Colonic mucosa (tissue), 4 donors: ENCODE measurements at regions of chr11 and their contacts with region 1.

Region 1: DNA sequence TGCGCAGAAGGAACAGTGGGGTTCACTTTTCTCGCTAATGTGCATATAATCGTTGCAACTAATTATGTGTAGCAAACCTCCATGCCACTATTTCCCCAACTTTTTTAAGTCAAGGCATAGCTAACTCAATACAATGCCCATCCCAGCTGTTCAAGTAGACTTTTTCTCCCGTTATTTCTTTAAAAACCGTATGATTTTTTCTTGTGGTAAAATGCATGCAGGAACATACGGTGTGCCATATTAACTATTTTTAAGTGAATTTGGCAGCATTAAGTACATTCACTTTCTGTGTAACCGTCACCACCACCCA is 2.8 kb upstream of the DUSP8 start:
- DNase-seq: no peak
- H3K4me3 ChIP-seq: no peak overlapping the region
- H3K27ac ChIP-seq: peak overlapping the region; percentile 87
- H3K4me1 ChIP-seq: no peaks in the 10 kb centered on the region
- H3K27me3 ChIP-seq: no peaks in the 10 kb centered on the region
- CTCF ChIP-seq: peak; percentile 5

Region 2: GRCh38 chr11:1541474-1542204 is 33.2 kb before region 1 on chr11:
- intact Hi-C with region 1: loop called (anchors 5 kb)
- DNase-seq: no peak
- H3K4me3 ChIP-seq: no peak overlapping the region
- H3K27ac ChIP-seq: no peak overlapping the region
- H3K4me1 ChIP-seq: peaks cover 4% of the 10 kb centered on the region
- H3K27me3 ChIP-seq: peaks cover 3% of the 10 kb centered on the region
- CTCF ChIP-seq: no peak

Region 3: DNA sequence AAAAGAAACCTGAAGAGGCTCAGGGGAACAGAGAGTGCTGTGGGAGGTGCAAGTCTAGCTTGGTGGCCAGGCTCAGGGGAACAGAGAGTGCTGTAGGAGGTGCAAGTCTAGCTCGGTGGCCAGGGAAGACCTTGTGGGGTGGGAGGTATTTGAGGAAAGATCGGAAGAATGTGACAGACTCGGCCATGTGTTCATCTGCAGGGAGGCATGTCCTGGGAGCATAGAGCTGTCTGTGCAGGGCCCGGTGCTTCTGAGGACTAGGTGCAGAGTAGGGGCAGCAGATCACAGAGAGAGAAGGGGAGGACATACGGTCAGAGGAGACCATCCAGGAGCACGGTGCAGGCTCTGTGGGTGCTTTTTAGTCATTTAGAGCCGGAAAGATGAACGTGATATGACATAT is 164.7 kb after region 1 on chr11:
- intact Hi-C with region 1: no loop called
- DNase-seq: no peak
- H3K4me3 ChIP-seq: no peak overlapping the region
- H3K27ac ChIP-seq: no peak overlapping the region
- H3K4me1 ChIP-seq: no peaks in the 10 kb centered on the region
- H3K27me3 ChIP-seq: no peaks in the 10 kb centered on the region
- CTCF ChIP-seq: no peak

Region 4: GRCh38 chr11:1757861-1758610 is 183.1 kb after region 1 on chr11:
- intact Hi-C with region 1: no loop called
- DNase-seq: peak; percentile 60
- H3K4me3 ChIP-seq: no peak overlapping the region
- H3K27ac ChIP-seq: peak overlapping the region; percentile 44
- H3K4me1 ChIP-seq: peaks cover 9% of the 10 kb centered on the region
- H3K27me3 ChIP-seq: no peaks in the 10 kb centered on the region
- CTCF ChIP-seq: no peak